ENCODE measurements at regions of chr19 and their contacts with region 1.

Region 1: GRCh38 chr19:43555185-43555770 is 20.0 kb downstream of the XRCC1 start:
- DNase-seq: peak; percentile 91
- ATAC-seq: peak; percentile 99
- H3K4me3 Mint-ChIP-seq: no peak overlapping the region
- H3K27ac Mint-ChIP-seq: no peak overlapping the region
- H3K4me1 Mint-ChIP-seq: peaks cover 6% of the 10 kb centered on the region
- H3K27me3 Mint-ChIP-seq: no peaks in the 10 kb centered on the region
- CTCF ChIP-seq: peak; percentile 68

Region 2: DNA sequence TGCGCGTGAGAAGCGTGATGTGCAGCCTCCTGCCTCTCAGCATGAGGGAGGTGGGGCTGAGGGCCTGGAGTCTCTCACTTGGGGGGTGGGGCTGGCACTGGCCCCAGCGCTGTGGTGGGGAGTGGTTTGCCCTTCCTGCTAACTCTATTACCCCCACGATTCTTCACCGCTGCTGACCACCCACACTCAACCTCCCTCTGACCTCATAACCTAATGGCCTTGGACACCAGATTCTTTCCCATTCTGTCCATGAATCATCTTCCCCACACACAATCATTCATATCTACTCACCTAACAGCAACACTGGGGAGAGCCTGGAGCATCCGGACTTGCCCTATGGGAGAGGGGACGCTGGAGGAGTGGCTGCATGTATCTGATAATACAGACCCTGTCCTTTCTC is 193.1 kb before region 1 on chr19:
- CTCF ChIA-PET with region 1: no interaction called
- POLR2A ChIA-PET with region 1: no interaction called
- intact Hi-C with region 1: no loop called
- DNase-seq: no peak
- ATAC-seq: no peak
- H3K4me3 Mint-ChIP-seq: no peak overlapping the region
- H3K27ac Mint-ChIP-seq: no peak overlapping the region
- H3K4me1 Mint-ChIP-seq: no peaks in the 10 kb centered on the region
- H3K27me3 Mint-ChIP-seq: no peaks in the 10 kb centered on the region
- CTCF ChIP-seq: no peak

Region 3: DNA sequence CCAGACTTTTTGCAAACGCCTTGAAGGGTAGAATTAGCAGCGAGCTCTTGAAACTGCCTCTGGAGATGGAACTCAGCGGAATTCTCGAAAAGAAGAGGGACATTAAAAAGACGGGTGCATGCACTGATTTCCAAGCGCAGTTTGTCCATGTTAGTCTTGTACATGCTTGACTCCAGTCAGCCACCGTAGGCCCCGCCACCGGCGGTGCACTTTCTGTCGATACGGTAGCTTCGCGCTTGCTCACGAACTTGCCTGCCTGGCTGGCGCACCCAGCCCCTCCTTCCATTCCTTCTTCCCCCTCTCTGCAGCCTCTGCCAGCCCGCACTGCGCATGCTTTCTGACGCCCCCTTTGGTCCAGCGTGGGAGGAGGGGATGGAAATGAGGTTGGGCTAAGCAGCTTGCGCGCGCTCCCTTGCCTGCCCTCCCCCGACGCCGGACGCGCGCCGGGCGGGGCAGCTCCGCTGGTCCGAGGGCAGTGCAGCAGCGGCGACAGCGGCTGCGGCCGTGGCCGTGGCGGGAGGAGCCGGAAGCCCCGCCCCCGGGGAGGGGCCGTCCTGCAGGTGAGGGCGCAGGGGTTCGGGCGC is 22.2 kb before region 1 on chr19 and contains the start of gene ZNF575:
- CTCF ChIA-PET with region 1: interaction called, 56 read pairs
- POLR2A ChIA-PET with region 1: interaction called, 4 read pairs
- intact Hi-C with region 1: no loop called
- DNase-seq: peak; percentile 95
- ATAC-seq: peak; percentile 56
- H3K4me3 Mint-ChIP-seq: peak within 1 kb of the TSS; percentile 82
- H3K27ac Mint-ChIP-seq: peak within 1 kb of the TSS; percentile 94
- H3K4me1 Mint-ChIP-seq: peaks cover 16% of the 10 kb centered on the region
- H3K27me3 Mint-ChIP-seq: no peaks in the 10 kb centered on the region
- CTCF ChIP-seq: no peak
- total RNA-seq, gene ZNF575: 1.2 to 2.0 TPM

Region 4: DNA sequence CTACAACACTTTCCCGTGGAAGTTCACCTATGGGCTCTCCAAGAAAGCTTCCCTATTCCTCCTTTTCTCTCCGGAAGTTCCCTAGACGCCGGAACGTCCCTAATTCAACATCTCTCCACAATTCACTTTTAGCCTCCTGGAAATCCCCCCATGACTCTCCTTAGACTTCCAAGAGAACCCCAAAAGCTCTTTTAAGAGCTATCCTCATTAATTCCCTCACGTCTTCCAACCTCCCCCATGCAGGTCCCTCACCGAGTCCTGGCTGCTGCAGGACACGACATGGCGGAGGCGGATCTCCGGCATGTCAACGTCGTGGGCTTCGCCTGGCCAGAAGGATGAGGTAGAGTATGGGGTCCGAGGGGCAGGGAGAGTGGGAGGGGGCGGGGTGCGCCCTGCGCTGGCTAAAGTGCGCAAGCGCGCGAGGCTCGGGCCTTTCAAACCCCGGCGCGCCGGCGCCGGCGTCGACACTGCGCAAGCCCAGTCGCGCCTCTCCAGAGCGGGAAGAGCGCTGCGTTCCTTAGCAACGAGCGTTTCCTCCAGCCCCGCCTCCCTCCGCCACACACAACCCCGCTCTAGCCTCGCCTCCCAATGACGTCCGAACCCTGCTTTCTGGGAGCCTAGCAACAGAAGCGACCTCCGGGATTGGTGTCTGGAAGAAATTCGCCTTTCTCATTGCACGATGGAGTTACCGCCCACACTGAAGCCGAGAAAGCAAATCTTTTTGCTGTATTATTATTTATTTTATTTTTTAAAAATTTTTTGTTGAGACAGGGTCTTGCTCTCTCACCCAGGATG is 20.1 kb after region 1 on chr19 and contains the starts of genes PINLYP and XRCC1:
- CTCF ChIA-PET with region 1: interaction called, 57 read pairs
- POLR2A ChIA-PET with region 1: no interaction called
- intact Hi-C with region 1: no loop called
- DNase-seq: peak; percentile 99
- ATAC-seq: peak; percentile 99
- H3K4me3 Mint-ChIP-seq: peak within 1 kb of the TSS; percentile 96
- H3K27ac Mint-ChIP-seq: peak within 1 kb of the TSS; percentile 94
- H3K4me1 Mint-ChIP-seq: peaks cover 37% of the 10 kb centered on the region
- H3K27me3 Mint-ChIP-seq: no peaks in the 10 kb centered on the region
- CTCF ChIP-seq: no peak
- total RNA-seq, gene PINLYP: 9.7 to 12.3 TPM
- total RNA-seq, gene XRCC1: 29.4 to 32.4 TPM

Region 5: DNA sequence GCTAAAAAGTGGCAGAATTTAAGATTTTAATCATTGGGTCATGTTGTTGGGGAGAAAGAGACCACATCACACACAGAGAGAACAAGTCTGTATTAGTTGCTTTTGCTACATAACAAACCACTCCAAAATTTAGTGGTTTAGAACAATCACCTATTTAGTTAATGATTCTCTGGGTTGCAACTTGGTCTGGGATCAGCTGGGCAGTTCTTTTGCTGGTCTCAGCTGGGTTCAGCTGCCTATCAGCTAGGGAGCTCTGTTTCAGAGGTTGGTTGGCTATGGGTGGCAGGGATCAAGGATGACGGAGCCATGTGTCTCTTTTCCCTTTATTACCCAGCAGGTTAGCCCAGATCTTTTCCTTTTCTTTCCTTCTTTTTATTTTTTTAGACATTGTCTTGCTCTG is 29.2 kb after region 1 on chr19:
- CTCF ChIA-PET with region 1: interaction called, 188 read pairs
- POLR2A ChIA-PET with region 1: interaction called, 3 read pairs
- intact Hi-C with region 1: no loop called
- DNase-seq: no peak
- ATAC-seq: no peak
- H3K4me3 Mint-ChIP-seq: no peak overlapping the region
- H3K27ac Mint-ChIP-seq: peak overlapping the region; percentile 35
- H3K4me1 Mint-ChIP-seq: peaks cover 12% of the 10 kb centered on the region
- H3K27me3 Mint-ChIP-seq: no peaks in the 10 kb centered on the region
- CTCF ChIP-seq: no peak

Measured in activated CD8-positive, alpha-beta T cell treated with anti-CD3 and anti-CD28 coated beads for 36 hours (primary cell).